ENCODE measurements at regions of chr17 and their contacts with region 1.

Region 1: GRCh38 chr17:64145757-64146417 is 15.9 kb upstream of the ERN1 start:
- DNase-seq: peak; percentile 89 to 98 (median 95)
- H3K4me3 ChIP-seq: peak overlapping the region; percentile 86
- H3K4me3 Mint-ChIP-seq: no peak overlapping the region
- H3K27ac ChIP-seq: peak overlapping the region; percentile 83
- H3K27ac Mint-ChIP-seq: no peak overlapping the region
- H3K4me1 ChIP-seq: peaks cover 25% of the 10 kb centered on the region
- H3K4me1 Mint-ChIP-seq: peaks cover 20 to 26% (median 26%) of the 10 kb centered on the region in 3 donors
- H3K27me3 ChIP-seq: no peaks in the 10 kb centered on the region
- H3K27me3 Mint-ChIP-seq: no peaks in the 10 kb centered on the region

Region 2: DNA sequence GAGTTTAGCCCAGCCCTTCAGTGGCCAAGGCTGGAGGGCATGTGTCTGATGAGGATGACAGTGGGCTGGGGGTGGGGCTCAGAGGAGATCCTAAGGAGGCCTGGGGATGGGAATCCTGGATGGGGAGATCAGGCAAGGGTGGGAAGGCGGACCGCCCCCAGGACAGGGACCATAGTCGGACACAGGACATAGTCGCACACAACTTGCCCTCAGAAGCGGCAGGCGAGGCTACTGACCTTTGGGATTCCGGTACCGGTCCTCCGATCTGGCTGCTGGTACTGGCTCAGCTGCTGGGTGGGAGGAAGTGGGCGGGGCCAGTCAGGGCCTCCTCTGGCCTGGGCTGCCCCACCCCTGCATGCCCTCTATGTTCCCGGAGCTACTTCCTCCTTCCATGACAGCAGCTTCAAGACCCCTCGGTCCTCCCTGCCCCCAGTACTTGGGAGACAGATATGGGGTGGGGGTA is 214.8 kb before region 1 on chr17:
- CTCF ChIA-PET with region 1: interaction called, 3 read pairs
- POLR2A ChIA-PET with region 1: interaction called, 14 read pairs
- DNase-seq: peak; percentile 40 to 74 (median 60)
- H3K4me3 ChIP-seq: peak overlapping the region; percentile 68
- H3K4me3 Mint-ChIP-seq: peak overlapping the region; percentile 75 to 93 (median 90)
- H3K27ac ChIP-seq: peak overlapping the region; percentile 27
- H3K27ac Mint-ChIP-seq: peak overlapping the region; percentile 81 to 96 (median 91)
- H3K4me1 ChIP-seq: peaks cover 24% of the 10 kb centered on the region
- H3K4me1 Mint-ChIP-seq: peaks cover 20 to 30% (median 23%) of the 10 kb centered on the region in 3 donors
- H3K27me3 ChIP-seq: no peaks in the 10 kb centered on the region
- H3K27me3 Mint-ChIP-seq: no peaks in the 10 kb centered on the region

Region 3: DNA sequence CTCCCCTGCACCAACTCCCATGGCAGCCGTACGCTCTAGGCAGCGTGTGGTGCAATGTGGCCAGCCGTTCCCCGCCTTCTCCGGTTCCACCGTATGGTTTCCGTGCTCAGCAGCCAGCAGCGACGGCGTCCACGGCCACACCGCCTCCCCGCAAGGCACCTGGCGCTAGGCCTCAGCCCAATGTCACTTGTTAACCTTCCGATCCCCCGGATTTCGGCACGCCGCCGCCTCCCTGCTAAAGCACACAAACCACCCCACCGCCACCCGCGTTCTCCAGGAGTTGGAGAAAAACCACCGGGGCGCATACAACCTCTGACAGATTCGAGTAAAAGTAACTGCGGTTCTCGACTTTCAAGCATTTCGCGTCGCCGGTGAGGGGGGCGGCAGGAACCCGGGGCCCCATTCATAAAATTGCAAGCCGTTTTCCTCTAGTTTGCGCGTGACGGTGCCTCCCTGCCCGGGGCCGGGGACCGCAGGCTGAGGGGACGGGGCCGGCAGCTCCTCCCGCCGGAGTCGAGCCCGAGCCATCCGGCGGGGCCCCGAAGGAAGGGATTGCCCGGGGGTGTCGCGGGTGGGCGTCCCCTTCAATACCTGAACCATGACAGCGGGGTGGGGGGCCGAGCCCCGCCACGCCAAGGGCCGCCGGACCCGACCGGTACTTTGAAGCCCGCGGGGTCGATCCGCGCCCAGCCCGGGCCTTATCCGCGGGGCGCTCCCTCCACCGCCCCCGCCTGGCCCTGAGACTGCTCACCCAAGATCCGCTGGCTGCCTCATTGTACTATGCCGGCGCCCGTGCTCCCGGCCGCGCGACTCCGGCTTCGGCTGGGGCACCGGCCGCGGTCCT is 116.8 kb after region 1 on chr17 and contains the start of gene TEX2:
- CTCF ChIA-PET with region 1: interaction called, 3 read pairs
- POLR2A ChIA-PET with region 1: interaction called, 13 read pairs
- DNase-seq: peak; percentile 50 to 79 (median 73)
- H3K4me3 ChIP-seq: peak within 1 kb of the TSS; percentile 88
- H3K4me3 Mint-ChIP-seq: peak within 1 kb of the TSS; percentile 90 to 97 (median 95)
- H3K27ac ChIP-seq: peak within 1 kb of the TSS; percentile 68
- H3K27ac Mint-ChIP-seq: peak within 1 kb of the TSS; percentile 87 to 99 (median 95)
- H3K4me1 ChIP-seq: peaks cover 32% of the 10 kb centered on the region
- H3K4me1 Mint-ChIP-seq: peaks cover 24 to 44% (median 32%) of the 10 kb centered on the region in 3 donors
- H3K27me3 ChIP-seq: no peaks in the 10 kb centered on the region
- H3K27me3 Mint-ChIP-seq: peaks cover 7 to 16% of the 10 kb centered on the region in 2 donors
- total RNA-seq, gene TEX2: 21.9 to 22.0 TPM